CD4-positive, alpha-beta memory T cell (primary cell): ENCODE measurements at regions of chr17 and their contacts with region 1.

Region 1: DNA sequence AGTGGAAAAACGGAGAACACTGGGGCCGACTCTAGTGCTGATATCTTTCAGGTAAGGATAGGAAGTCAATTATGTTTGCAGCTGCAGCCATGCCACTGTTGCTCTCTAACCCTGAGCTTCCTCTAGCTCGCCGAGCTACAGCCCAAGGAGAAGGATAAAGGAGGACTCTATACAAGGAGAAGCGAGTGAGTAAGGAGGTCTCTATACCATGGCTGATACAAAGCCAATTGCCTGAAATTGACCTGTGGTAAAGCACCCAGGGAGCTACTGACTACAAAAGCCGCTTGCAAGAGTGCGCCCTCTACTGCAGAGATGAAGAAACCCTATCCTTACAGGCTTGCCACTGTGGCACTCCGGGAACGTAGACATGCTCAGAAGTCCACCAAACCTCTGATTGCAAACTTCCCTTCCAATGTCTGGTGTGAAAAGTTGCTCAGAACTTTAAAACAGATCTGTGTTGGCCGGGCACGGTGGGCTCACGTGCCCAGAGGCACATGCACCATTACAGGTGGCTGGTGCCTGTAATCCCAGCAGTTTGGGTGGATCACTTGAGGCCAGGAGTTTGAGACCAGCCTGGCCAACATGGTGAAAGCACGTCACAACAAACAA is 10.8 kb upstream of the SLC46A1 start:
- DNase-seq: peak; percentile 37 to 58 (median 45)
- H3K4me3 ChIP-seq: no peak overlapping the region
- H3K4me3 Mint-ChIP-seq: no peak overlapping the region
- H3K27ac ChIP-seq: no peak overlapping the region
- H3K27ac Mint-ChIP-seq: peak overlapping the region in 1 of 7 donors; percentile 62
- H3K4me1 ChIP-seq: no peaks in the 10 kb centered on the region
- H3K4me1 Mint-ChIP-seq: peaks cover 4 to 7% (median 5%) of the 10 kb centered on the region in 4 donors
- H3K27me3 ChIP-seq: no peaks in the 10 kb centered on the region
- H3K27me3 Mint-ChIP-seq: peaks cover 5 to 19% of the 10 kb centered on the region in 2 donors

Region 2: DNA sequence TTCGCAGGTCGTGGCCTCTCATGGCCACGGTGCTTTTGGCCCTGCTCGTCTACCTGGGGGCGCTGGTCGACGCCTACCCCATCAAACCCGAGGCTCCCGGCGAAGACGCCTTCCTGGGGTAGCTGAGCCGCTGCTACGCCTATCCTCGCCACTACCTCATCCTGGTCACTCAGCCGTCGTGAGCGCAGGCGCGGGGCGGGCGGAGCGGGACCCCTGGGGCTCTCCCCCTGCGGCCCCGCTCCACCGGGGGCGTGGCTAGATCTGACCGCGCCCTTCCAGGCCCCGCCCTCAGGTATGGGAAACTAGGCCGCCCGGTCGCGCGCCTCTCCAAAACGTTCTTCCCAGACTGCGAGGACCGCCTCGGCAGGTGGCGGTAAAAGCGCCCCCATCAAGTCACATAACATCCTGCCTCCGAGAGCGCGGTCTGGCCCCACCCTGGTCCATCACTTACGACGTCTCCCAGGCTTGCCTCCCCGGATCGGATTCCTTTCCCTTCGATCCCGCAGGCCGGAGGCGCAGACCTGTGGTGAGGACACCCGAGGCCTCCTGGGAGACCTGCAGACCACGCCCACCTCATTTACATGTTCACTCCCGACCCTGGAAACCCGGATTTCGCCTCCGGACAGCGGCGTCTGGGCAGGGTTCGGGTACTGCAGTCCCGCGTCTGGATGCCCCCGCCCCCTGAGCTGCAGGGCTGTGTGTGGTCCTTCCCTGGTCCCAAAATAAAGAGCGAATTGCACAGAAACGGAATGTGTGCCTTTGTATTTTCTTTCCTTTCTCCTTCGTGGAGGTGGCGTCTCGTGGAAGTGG is 189.3 kb before region 1 on chr17:
- CTCF ChIA-PET with region 1: interaction called, 12 read pairs
- POLR2A ChIA-PET with region 1: no interaction called
- intact Hi-C with region 1: loop called (anchors 2 kb)
- DNase-seq: peak in 1 of 5 donors; percentile 13
- H3K4me3 ChIP-seq: peak overlapping the region in 1 of 2 donors; percentile 4
- H3K4me3 Mint-ChIP-seq: peak overlapping the region; percentile 35 to 85 (median 73)
- H3K27ac ChIP-seq: no peak overlapping the region
- H3K27ac Mint-ChIP-seq: no peak overlapping the region
- H3K4me1 ChIP-seq: peaks cover 10% of the 10 kb centered on the region
- H3K4me1 Mint-ChIP-seq: peaks cover 4 to 14% (median 10%) of the 10 kb centered on the region in 4 donors
- H3K27me3 ChIP-seq: peaks cover 19% of the 10 kb centered on the region
- H3K27me3 Mint-ChIP-seq: peaks cover 35 to 37% of the 10 kb centered on the region in 2 donors

Region 3: DNA sequence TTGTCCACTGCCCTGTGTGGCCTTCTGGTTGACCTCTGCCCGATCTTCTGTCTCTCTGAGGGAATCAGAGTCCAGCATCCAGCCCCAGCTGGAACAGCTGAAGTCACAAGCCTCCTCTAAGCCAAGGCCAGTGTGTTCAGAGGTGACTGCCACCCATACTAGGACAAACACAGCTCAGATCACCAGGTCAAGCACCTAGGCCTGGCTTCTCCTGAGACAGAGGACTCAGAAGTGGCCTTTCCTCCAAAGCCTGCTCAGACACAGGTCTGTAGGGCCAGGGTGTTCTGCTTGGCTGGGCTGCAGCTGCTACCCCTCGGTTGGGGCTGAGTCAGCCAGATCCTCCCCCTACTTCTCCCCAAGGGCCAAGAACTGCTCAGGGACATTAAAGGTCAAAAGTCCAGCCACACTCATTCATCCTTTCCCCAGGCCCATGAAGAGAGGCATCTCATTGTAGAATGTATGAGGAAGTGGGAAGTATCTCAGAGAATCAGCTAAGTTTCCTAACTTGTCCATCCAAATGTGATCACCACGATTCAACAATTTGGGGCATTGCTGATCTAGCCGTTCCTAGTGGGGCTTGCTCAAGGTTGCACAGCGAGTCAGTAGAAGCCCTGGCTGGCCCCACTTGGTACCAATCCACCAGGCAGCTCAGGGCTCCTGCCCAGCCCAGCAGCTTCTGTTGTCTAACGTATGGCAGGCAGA is 18.4 kb before region 1 on chr17:
- CTCF ChIA-PET with region 1: interaction called, 19 read pairs
- POLR2A ChIA-PET with region 1: interaction called, 3 read pairs
- intact Hi-C with region 1: no loop called
- DNase-seq: no peak
- H3K4me3 ChIP-seq: no peak overlapping the region
- H3K4me3 Mint-ChIP-seq: no peak overlapping the region
- H3K27ac ChIP-seq: no peak overlapping the region
- H3K27ac Mint-ChIP-seq: peak overlapping the region; percentile 24 to 65 (median 50)
- H3K4me1 ChIP-seq: no peaks in the 10 kb centered on the region
- H3K4me1 Mint-ChIP-seq: peaks cover 0 to 12% (median 4%) of the 10 kb centered on the region in 4 donors
- H3K27me3 ChIP-seq: no peaks in the 10 kb centered on the region
- H3K27me3 Mint-ChIP-seq: no peaks in the 10 kb centered on the region

Region 4: DNA sequence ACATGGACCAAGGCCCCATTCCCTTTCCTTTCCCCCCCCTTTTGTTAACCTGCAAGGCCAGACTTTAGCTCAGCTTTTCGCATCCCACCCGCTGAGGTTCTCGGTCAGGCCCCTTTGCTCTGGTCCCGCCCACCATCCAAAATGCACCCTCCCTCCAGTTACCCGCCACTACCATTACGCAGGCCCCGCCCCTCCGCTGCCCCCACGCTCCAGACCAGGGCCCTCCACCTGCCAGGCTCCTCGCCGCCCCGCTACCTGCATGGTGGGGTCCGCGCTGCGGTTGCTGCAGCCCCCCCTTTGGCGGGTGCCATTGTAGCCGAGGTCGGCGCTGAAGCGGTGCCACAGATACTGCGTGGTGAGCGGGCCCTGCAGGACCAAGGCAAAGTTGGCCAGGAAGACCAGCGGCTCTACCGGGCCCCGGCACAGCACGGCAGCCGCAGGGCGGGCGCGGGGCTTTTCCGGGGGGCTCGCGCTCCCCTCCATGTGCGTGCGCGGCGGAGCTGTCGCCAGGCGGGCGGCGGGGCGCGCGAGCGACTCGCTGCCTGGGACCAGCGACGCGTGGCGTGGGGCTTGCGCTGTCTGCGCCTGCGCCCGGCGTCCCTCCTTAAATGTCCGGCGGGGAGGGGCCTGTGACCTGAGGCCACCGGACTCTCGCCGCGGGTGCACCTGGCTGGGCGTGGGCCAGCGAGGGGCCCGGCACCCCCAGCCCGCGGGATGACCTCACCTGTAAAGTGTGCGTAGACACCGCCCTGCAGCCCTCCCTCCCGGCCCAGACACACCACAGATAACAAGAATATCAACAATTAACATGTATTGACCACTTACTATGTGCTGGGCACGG is 11.0 kb before region 1 on chr17 and contains the start of gene SLC46A1:
- CTCF ChIA-PET with region 1: interaction called, 19 read pairs
- POLR2A ChIA-PET with region 1: no interaction called
- intact Hi-C with region 1: no loop called
- DNase-seq: peak in 3 of 5 donors; percentile 7 to 25 (median 19)
- H3K4me3 ChIP-seq: peak within 1 kb of the TSS; percentile 47 to 48
- H3K4me3 Mint-ChIP-seq: peak within 1 kb of the TSS; percentile 76 to 86 (median 80)
- H3K27ac ChIP-seq: no peak within 1 kb of the TSS
- H3K27ac Mint-ChIP-seq: peak within 1 kb of the TSS in 4 of 7 donors; percentile 29 to 74 (median 54)
- H3K4me1 ChIP-seq: peaks cover 14% of the 10 kb centered on the region
- H3K4me1 Mint-ChIP-seq: peaks cover 5 to 26% (median 13%) of the 10 kb centered on the region in 4 donors
- H3K27me3 ChIP-seq: peaks cover 5% of the 10 kb centered on the region
- H3K27me3 Mint-ChIP-seq: peaks cover 3 to 10% of the 10 kb centered on the region in 2 donors
- total RNA-seq, gene SLC46A1: 2.4 to 2.6 TPM

Region 5: DNA sequence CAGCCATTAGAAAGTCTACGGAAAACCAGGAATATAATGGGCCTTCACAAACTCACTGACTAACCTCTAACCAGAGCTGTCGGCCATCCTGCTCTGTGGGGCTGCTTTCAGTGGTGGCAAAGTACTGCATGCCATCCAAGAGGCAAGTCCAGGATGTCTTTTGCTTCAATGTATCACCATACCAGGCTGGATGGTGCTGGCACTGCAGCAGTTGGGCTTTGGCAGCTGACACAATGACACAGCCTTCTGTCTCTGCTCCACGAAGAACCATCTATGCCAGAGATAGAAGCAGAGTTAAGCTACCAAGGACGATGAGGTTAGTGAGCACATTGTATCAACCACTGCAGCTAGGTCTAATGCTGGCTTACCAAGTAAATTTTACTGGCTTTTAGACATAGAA is 206.9 kb after region 1 on chr17:
- CTCF ChIA-PET with region 1: no interaction called
- POLR2A ChIA-PET with region 1: no interaction called
- intact Hi-C with region 1: no loop called
- DNase-seq: no peak
- H3K4me3 ChIP-seq: no peak overlapping the region
- H3K4me3 Mint-ChIP-seq: no peak overlapping the region
- H3K27ac ChIP-seq: no peak overlapping the region
- H3K27ac Mint-ChIP-seq: no peak overlapping the region
- H3K4me1 ChIP-seq: no peaks in the 10 kb centered on the region
- H3K4me1 Mint-ChIP-seq: peaks cover 0 to 5% (median 3%) of the 10 kb centered on the region in 4 donors
- H3K27me3 ChIP-seq: no peaks in the 10 kb centered on the region
- H3K27me3 Mint-ChIP-seq: no peaks in the 10 kb centered on the region